CD4-positive, alpha-beta memory T cell (primary cell): ENCODE measurements at regions of chr2 and their contacts with region 1.

Region 1: DNA sequence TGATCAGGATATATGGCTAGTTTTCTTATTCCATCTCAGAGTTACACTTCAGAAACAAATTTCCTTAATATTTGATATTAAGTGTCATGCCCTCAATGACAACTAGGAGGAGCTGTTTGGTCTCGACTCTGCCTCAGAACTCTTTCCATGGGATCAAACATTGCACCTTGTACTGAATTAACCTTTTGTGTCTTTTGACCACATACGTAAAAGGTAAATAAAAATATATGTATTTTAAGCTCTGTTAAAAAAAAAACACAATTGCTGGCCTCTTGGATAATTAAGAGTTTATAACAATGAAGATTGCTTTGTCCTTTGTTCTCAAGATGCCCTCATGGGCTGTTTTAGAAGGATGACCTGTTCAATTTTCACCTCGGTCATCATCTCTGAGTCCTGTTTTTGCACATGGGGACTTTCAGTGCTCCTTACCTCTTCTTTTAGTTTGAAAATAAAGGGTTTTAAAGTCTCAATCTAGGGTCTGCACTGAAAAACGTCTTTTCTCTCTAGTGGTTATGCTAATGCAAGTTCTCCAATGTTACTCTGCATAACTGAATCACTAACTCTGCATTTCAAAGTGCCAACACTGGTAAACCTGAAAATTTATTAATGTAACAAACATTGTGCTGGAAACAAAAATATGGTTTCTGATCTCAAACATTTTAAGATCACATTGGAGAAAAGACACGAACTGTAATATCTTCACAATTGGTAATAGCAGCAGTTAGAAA is 18.8 kb upstream of the FN1 start:
- DNase-seq: peak in 1 of 5 donors; percentile 15
- H3K4me3 ChIP-seq: no peak overlapping the region
- H3K4me3 Mint-ChIP-seq: no peak overlapping the region
- H3K27ac ChIP-seq: no peak overlapping the region
- H3K27ac Mint-ChIP-seq: no peak overlapping the region
- H3K4me1 ChIP-seq: no peaks in the 10 kb centered on the region
- H3K4me1 Mint-ChIP-seq: no peaks in the 10 kb centered on the region
- H3K27me3 ChIP-seq: peaks cover 4% of the 10 kb centered on the region
- H3K27me3 Mint-ChIP-seq: peaks cover 8 to 14% of the 10 kb centered on the region in 2 donors

Region 2: DNA sequence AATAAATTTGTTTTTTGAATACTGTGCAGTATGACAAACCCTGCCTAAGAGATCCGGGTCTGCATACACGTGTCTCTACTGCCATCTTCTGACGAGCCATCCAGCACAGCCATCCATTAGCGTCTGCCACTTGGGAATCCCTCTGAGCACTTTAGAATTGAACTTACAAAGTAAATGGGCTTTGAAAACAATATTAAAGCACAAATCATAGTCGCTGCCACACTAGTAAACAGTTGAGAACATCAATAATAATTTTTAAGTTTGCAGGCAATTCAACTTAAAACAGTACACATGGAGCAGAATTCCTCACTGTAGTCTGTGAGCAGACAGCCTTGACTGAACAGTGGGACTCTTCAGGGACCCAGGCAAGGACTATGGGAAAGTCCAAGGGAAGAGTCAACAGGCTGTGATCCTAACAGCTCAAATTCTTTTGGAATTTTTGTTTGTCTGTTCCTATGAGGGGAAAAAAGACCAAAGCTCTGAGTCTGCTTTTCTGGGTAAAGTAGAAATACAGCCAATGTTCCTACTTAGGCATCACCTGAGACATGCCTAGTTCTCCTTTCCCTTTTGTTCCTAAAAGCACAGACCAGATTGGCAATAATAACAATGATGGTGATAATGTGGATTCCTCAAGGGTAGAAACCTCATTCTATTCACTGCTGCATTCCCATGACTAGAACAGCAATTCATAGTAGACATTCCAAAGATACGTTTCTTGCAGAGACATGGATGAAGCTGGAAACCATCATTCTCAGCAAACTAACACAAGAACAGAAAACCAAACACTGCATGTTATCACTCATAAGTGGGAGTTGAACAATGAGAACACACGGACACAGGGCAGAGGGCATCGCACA is 465.8 kb after region 1 on chr2:
- CTCF ChIA-PET with region 1: interaction called, 4 read pairs
- POLR2A ChIA-PET with region 1: no interaction called
- intact Hi-C with region 1: loop called (anchors 1 kb)
- DNase-seq: peak; percentile 43 to 50 (median 46)
- H3K4me3 ChIP-seq: no peak overlapping the region
- H3K4me3 Mint-ChIP-seq: no peak overlapping the region
- H3K27ac ChIP-seq: no peak overlapping the region
- H3K27ac Mint-ChIP-seq: no peak overlapping the region
- H3K4me1 ChIP-seq: no peaks in the 10 kb centered on the region
- H3K4me1 Mint-ChIP-seq: no peaks in the 10 kb centered on the region
- H3K27me3 ChIP-seq: no peaks in the 10 kb centered on the region
- H3K27me3 Mint-ChIP-seq: peaks cover 4 to 8% of the 10 kb centered on the region in 2 donors